RWPE1 (cell line): ENCODE measurements at regions of chr20 and their contacts with region 1.

Region 1: DNA sequence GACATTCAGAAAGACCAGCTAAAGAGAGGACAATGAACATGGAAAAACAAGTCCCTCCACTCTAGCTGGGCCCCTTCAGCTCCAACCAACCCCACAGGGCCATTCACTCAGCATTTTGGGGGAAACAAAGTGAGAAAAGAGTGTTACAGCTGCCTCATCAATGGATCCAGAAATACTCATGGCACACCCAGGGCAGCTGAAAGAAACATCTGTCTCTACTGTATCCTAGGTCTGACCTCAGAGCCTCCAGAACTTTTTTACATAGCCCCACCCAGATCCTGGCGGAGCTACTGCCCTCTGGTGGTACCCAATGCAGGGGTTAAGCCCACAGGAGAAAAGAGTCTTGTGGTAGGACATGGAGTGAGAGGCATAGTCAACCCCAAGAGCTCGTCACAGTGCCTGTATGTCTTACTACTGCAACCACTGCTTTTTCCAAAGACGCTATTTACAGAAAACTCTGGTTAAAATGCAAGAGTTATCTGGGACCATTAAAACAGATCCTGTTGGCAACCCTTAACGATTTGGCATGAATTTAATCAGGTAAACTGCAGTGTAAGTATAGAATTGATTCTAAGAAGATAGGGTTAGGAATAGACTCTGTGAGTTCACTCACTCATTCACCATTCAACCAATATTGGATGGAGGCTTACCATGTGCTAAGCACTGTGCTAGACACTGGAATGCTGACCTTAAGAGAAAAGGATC is 37.4 kb upstream of the FAM83C start:
- DNase-seq: peak; percentile 78
- H3K27ac ChIP-seq: peak overlapping the region; percentile 3; the same call in 1 of the 2 replicates
- CTCF ChIP-seq: no peak

Region 2: DNA sequence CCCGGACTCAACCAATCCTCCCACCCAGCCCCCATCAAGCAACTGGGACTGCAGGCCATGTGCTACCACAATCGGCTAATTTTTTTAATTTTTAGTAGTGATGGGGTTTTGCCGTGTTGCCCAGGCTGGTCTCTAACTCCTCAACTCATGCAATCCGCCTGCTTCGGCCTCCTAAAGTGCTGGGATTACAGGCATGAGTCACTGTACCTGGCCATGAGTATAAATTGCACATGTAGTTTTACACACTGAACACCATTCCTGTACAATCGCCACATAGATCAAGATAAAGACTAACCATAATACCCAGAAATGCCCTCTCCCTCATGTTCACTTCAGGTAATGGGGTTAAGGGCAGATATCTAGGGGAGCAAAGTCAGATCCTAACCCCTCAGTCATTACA is 263.4 kb before region 1 on chr20:
- CTCF ChIA-PET with region 1: no interaction called
- POLR2A ChIA-PET with region 1: no interaction called
- DNase-seq: no peak
- H3K27ac ChIP-seq: no peak overlapping the region
- CTCF ChIP-seq: no peak

Region 3: GRCh38 chr20:35318502-35319157 is 11.0 kb before region 1 on chr20:
- CTCF ChIA-PET with region 1: interaction called, 16 read pairs
- POLR2A ChIA-PET with region 1: no interaction called
- DNase-seq: peak; percentile 99
- H3K27ac ChIP-seq: peak overlapping the region; percentile 85
- CTCF ChIP-seq: no peak